Activated CD4-positive, alpha-beta memory T cell treated with anti-CD3 and anti-CD28 coated beads for 36 hours (primary cell): ENCODE measurements at regions of chr22 and their contacts with region 1.

Region 1: DNA sequence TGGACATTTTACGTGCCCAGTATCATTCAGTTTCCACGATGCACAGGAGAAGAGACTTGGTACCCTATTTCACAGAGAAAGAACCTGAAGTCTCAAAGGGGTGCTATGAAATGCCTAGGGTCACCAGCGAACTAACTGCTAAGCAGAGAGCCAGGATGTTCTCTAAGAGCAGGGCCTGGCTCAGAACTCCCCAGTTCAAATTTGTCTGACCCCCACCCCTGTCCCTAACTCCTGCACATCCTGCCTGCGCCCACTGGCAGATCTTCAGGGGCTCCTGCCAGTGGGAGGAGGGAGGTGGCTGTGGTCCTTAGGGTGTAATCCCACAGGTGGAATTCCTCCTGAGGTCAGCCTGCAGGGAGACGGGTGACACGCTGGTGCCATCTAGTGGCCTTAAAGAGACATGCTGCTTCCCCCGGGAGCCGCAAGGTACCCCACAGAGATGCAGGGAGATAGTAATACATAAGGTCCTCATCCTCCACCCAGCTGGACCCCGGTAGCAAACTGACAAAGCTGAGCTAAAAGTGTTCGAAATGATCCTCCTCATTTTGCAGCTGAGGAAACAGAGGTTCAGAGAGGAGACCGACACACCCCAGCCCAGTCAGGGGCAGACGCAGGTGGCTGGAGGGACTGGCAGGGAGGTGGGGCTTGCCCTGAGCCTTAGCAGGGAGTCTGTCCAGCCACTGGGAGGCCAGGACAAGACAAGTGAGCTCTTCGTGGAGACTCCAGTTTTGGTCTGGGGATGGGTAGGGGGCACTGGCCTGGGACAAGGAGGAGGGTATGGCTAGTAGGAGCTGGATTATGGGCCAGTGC is 34.1 kb downstream of the MB start:
- DNase-seq: peak; percentile 64
- H3K4me3 Mint-ChIP-seq: no peak overlapping the region
- H3K27ac Mint-ChIP-seq: no peak overlapping the region
- H3K4me1 Mint-ChIP-seq: no peaks in the 10 kb centered on the region
- H3K27me3 Mint-ChIP-seq: no peaks in the 10 kb centered on the region

Region 2: GRCh38 chr22:35430897-35431322 is 152.2 kb before region 1 on chr22:
- CTCF ChIA-PET with region 1: interaction called, 41 read pairs
- POLR2A ChIA-PET with region 1: no interaction called
- intact Hi-C with region 1: loop called (anchors 2 kb)
- DNase-seq: peak; percentile 71
- H3K4me3 Mint-ChIP-seq: no peak overlapping the region
- H3K27ac Mint-ChIP-seq: no peak overlapping the region
- H3K4me1 Mint-ChIP-seq: no peaks in the 10 kb centered on the region
- H3K27me3 Mint-ChIP-seq: no peaks in the 10 kb centered on the region

Region 3: DNA sequence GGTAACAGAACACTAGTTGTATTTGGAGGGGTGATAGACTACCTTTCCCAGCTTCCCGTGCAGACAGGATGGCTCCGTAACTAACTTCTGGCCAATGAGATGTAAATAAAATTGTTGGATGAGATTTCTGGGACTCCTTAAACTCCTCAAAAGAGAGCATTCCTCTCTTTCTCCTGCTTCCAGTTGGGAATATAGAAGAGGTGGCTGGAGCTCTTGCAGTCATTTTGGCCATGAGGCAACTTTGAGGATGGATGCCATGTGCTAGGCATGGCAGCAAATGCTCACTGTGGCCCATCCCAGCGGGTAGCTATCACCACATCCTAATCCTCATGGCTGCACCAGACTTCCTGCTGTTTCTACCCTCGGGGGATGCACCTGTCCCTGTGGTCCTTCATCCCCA is 26.7 kb after region 1 on chr22:
- CTCF ChIA-PET with region 1: no interaction called
- POLR2A ChIA-PET with region 1: no interaction called
- intact Hi-C with region 1: no loop called
- DNase-seq: no peak
- H3K4me3 Mint-ChIP-seq: no peak overlapping the region
- H3K27ac Mint-ChIP-seq: no peak overlapping the region
- H3K4me1 Mint-ChIP-seq: peaks cover 8% of the 10 kb centered on the region
- H3K27me3 Mint-ChIP-seq: peaks cover 17% of the 10 kb centered on the region